Sigmoid colon (tissue), 7 donors: ENCODE measurements at regions of chr5 and their contacts with region 1.

Region 1: DNA sequence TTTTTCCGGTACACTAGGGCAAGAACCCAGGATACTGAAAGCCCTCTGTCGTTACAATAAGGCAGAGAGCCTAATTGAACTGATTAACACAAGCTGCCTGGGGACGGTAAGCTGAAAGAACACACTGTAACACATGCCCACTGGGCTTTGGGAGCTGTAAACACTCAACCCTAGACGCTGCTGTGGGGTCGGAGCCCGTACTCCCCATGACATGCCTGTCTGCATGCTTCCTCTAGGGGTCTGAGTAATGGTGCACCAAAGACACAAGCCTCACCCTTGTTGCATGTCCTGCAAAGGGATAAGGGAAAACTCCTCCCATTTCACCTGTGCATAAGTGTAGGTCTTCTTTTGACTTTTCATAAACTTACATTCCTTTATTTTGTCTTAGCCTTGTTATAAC is 194.0 kb downstream of the FBXL7 start:
- DNase-seq: no peak
- H3K4me3 ChIP-seq: no peak overlapping the region
- H3K27ac ChIP-seq: peak overlapping the region in 3 of 4 donors; percentile 66 to 72 (median 66)
- H3K4me1 ChIP-seq: peaks cover 0 to 54% (median 37%) of the 10 kb centered on the region in 4 donors
- H3K27me3 ChIP-seq: no peaks in the 10 kb centered on the region
- CTCF ChIP-seq: no peak
- EP300 ChIP-seq: no peak
- POLR2A ChIP-seq: no peak

Region 2: DNA sequence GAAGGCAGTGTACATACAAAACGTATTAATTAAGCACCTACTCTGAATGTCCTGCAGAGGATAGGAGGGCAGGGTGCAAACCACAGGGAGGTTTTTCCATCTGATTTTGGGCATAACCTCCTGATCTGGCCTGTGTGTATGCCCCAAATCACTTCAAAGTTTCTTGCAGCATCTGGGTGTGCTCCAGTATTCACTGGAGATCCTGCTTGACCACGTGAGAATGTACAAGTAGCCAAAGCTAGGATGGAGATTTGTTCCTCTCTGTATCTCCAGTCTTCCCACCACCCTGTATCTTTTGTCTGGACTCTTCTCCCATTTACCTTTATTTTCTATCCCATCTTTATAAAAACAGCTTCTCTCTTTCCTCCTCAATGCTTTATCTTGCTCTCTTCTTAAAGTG is 13.7 kb after region 1 on chr5:
- intact Hi-C with region 1: loop called (anchors 2 kb)
- DNase-seq: no peak
- H3K4me3 ChIP-seq: no peak overlapping the region
- H3K27ac ChIP-seq: no peak overlapping the region
- H3K4me1 ChIP-seq: peaks cover 0 to 29% (median 14%) of the 10 kb centered on the region in 4 donors
- H3K27me3 ChIP-seq: no peaks in the 10 kb centered on the region
- CTCF ChIP-seq: no peak
- EP300 ChIP-seq: no peak
- POLR2A ChIP-seq: no peak